Heart right ventricle (tissue), 16 donors: ENCODE measurements at regions of chr1 and their contacts with region 1.

Region 1: GRCh38 chr1:20029178-20029912 is 40.6 kb upstream of the PLA2G5 start:
- DNase-seq: peak; percentile 55 to 56
- ATAC-seq: peak; percentile 49 to 77 (median 61)
- H3K4me3 ChIP-seq: peak overlapping the region; percentile 22 to 58 (median 50)
- H3K27ac ChIP-seq: peak overlapping the region; percentile 79 to 96 (median 88)
- H3K4me1 ChIP-seq: peaks cover 0 to 40% (median 0%) of the 10 kb centered on the region in 9 donors
- H3K27me3 ChIP-seq: no peaks in the 10 kb centered on the region
- CTCF ChIP-seq: no peak

Region 2: GRCh38 chr1:18751425-18751824 is 1277.9 kb before region 1 on chr1:
- intact Hi-C with region 1: loop called in 1 of 10 experiments (anchors 5 kb)
- DNase-seq: no peak
- ATAC-seq: no peak
- H3K4me3 ChIP-seq: no peak overlapping the region
- H3K27ac ChIP-seq: no peak overlapping the region
- H3K4me1 ChIP-seq: no peaks in the 10 kb centered on the region
- H3K27me3 ChIP-seq: peaks cover 0 to 69% (median 40%) of the 10 kb centered on the region in 7 donors
- CTCF ChIP-seq: no peak

Region 3: GRCh38 chr1:19704247-19705113 is 324.9 kb before region 1 on chr1:
- intact Hi-C with region 1: no loop called
- DNase-seq: peak; percentile 62 to 72
- ATAC-seq: peak; percentile 83 to 91 (median 89)
- H3K4me3 ChIP-seq: no peak overlapping the region
- H3K27ac ChIP-seq: no peak overlapping the region
- H3K4me1 ChIP-seq: peaks cover 0 to 10% (median 9%) of the 10 kb centered on the region in 9 donors
- H3K27me3 ChIP-seq: no peaks in the 10 kb centered on the region
- CTCF ChIP-seq: peak; percentile 89 to 96 (median 93)

Region 4: DNA sequence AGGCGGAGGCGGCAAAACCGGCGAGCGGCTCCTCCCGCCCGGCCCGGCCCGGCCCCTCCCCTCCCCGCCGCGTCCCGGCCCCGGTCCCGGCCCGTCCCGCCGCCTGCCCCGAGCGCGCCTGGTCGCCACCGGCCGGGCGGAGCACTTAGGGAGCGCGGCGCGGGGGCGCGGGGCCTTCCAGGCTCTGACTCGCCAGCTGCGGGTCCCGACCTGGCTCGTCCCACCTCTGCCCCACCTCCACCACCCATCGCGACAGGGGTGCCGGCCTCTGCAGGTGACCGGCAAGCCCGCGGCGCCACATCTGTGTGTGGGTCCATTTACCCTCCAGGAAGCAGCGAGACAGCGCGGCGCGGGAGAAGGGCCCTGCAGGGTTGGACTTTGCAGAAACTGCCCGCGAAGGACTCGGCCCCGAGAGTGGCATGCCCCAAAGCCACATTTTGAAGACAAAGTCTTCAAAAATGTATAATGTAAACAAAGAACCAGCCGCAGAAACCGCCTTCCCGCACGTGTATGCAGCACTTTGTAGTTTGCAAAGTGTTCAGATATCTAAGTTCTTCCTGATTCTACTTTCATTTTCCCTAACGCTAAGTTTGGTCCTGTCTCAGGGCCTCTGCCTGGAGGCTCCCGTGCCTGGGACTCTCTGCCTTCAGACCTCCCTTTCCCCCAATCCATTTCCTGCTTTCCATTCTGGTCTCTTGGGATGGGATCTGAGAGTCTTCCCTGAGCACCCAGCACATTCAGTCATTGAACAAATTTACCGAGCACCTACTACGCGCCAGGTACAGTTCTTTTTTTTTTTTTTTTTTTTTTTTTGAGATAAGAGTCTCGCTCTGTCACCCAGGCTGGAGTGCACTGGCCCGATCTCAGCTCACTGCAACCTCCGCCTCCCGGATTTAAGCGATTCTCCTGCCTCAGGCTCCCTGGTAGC is 229.2 kb before region 1 on chr1 and contains the start of gene TMCO4:
- intact Hi-C with region 1: no loop called
- DNase-seq: peak; percentile 19 to 56
- ATAC-seq: peak; percentile 60 to 86 (median 74)
- H3K4me3 ChIP-seq: peak within 1 kb of the TSS; percentile 47 to 84 (median 74)
- H3K27ac ChIP-seq: peak within 1 kb of the TSS; percentile 59 to 91 (median 78)
- H3K4me1 ChIP-seq: peaks cover 0 to 20% (median 15%) of the 10 kb centered on the region in 9 donors
- H3K27me3 ChIP-seq: peaks cover 0 to 6% (median 0%) of the 10 kb centered on the region in 7 donors
- CTCF ChIP-seq: peak in 1 of 9 donors; percentile 3
- total RNA-seq, gene TMCO4: 6.6 to 9.7 (median 8.0) TPM

Region 5: DNA sequence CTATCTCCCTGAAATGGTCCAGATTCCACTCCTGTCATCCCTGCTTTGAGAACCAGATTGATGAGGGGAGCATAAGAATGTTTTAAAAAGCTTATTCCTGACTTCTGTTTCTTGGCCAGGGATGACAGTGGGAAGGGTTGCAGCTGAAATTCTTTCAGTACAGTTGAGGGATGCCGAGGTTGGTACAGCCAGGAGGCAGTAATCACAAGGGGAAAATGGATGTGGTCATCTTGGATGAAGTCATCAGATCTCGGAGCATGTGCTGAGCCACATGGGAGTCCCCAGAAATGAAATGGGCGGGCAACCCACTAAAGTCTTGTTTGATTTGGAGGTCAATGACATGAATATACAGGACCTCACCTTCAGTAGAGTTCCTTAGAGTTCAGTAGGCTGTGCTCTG is 87.3 kb before region 1 on chr1:
- intact Hi-C with region 1: no loop called
- DNase-seq: no peak
- ATAC-seq: peak in 1 of 8 donors; percentile 80
- H3K4me3 ChIP-seq: no peak overlapping the region
- H3K27ac ChIP-seq: no peak overlapping the region
- H3K4me1 ChIP-seq: no peaks in the 10 kb centered on the region
- H3K27me3 ChIP-seq: peaks cover 0 to 20% (median 0%) of the 10 kb centered on the region in 7 donors
- CTCF ChIP-seq: no peak

Region 6: DNA sequence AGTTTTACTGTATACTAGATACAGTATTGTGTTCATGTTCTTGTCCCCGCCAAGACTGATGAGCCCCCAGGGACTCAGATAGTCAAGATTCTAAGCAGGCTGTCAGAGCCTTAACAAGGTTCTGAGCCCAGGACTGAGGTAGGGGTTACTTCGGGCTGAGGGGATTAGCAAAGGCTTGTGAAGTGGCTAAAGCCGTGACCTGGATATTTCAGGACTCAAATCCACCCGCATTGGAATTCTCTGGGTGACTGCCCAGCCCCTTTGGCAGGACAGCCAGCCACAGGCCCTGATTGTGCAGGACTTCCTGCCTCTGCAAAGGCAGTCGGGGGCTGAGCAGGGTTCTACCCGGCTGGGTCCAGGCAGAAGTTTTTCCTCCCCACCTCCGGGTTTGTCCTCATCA is 40.5 kb after region 1 on chr1 and contains the start of gene PLA2G5:
- intact Hi-C with region 1: loop called in 1 of 10 experiments (anchors 5 kb)
- DNase-seq: peak; percentile 82 to 88
- ATAC-seq: peak; percentile 88 to 96 (median 94)
- H3K4me3 ChIP-seq: peak within 1 kb of the TSS; percentile 20 to 63 (median 49)
- H3K27ac ChIP-seq: peak within 1 kb of the TSS; percentile 71 to 91 (median 88)
- H3K4me1 ChIP-seq: peaks cover 5 to 60% (median 44%) of the 10 kb centered on the region in 9 donors
- H3K27me3 ChIP-seq: no peaks in the 10 kb centered on the region
- CTCF ChIP-seq: no peak
- total RNA-seq, gene PLA2G5: 31.5 to 58.2 (median 49.3) TPM